PC-9 (cell line): ENCODE measurements at regions of chrX and their contacts with region 1.

Region 1: DNA sequence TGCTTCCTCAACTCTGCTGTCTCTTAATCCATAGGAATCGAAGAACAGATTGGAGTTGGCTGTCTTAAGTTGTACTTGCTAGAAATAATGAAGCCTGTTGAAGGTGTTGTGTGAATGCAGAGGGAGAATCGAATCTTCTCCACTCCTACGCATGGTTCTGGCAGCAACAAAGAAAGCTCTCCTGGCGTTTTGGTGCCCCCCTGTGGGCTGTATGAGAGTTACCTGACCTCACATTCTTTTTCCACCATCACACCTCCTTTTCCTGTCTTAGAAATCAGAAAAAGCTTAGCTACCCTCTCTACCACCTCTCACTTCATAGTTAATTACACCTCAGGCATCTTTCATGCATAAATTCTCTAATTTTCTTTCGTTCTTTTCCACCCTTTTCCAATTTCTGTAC is 16.3 kb downstream of the KLF8 start:
- DNase-seq: peak in 1 of 2 experiments; percentile 72
- H3K4me3 ChIP-seq: no peak overlapping the region
- H3K27ac ChIP-seq: no peak overlapping the region
- H3K4me1 ChIP-seq: no peaks in the 10 kb centered on the region
- H3K27me3 ChIP-seq: no peaks in the 10 kb centered on the region
- CTCF ChIP-seq: peak; percentile 74

Region 2: DNA sequence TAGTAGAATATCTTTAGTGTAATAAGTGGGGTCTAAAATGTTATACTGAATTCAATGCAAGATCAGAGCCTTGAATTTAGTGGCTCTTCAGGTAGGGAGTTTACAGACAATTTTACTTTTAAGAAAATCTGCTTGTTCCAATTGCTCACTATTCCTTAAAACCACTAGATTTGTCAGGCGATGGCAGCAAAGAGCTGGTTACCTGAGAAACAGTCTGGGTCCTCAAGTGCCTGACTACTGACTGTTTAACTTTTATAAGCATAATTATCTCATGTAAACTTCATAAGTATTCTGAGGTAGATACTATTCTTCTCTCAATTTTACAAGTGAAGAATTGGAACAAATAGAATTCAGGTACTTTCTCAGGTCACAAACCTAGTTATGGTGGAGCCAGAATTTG is 446.7 kb before region 1 on chrX:
- CTCF ChIA-PET with region 1: no interaction called
- POLR2A ChIA-PET with region 1: interaction called, 4 read pairs
- intact Hi-C with region 1: loop called (anchors 2 kb)
- DNase-seq: no peak
- H3K4me3 ChIP-seq: no peak overlapping the region
- H3K27ac ChIP-seq: no peak overlapping the region
- H3K4me1 ChIP-seq: 0 out of 2 replicates have a peak, but pooled peaks cover under 1% of the 10 kb centered on the region
- H3K27me3 ChIP-seq: no peaks in the 10 kb centered on the region
- CTCF ChIP-seq: no peak; the same call in 1 of the 2 replicates

Region 3: GRCh38 chrX:56025872-56026571 is 222.5 kb before region 1 on chrX:
- CTCF ChIA-PET with region 1: interaction called, 14 read pairs
- POLR2A ChIA-PET with region 1: no interaction called
- intact Hi-C with region 1: loop called (anchors 2 kb)
- DNase-seq: peak in 1 of 2 experiments; percentile 54
- H3K4me3 ChIP-seq: no peak overlapping the region
- H3K27ac ChIP-seq: no peak overlapping the region
- H3K4me1 ChIP-seq: peaks cover 29% of the 10 kb centered on the region
- H3K27me3 ChIP-seq: no peaks in the 10 kb centered on the region
- CTCF ChIP-seq: no peak

Region 4: DNA sequence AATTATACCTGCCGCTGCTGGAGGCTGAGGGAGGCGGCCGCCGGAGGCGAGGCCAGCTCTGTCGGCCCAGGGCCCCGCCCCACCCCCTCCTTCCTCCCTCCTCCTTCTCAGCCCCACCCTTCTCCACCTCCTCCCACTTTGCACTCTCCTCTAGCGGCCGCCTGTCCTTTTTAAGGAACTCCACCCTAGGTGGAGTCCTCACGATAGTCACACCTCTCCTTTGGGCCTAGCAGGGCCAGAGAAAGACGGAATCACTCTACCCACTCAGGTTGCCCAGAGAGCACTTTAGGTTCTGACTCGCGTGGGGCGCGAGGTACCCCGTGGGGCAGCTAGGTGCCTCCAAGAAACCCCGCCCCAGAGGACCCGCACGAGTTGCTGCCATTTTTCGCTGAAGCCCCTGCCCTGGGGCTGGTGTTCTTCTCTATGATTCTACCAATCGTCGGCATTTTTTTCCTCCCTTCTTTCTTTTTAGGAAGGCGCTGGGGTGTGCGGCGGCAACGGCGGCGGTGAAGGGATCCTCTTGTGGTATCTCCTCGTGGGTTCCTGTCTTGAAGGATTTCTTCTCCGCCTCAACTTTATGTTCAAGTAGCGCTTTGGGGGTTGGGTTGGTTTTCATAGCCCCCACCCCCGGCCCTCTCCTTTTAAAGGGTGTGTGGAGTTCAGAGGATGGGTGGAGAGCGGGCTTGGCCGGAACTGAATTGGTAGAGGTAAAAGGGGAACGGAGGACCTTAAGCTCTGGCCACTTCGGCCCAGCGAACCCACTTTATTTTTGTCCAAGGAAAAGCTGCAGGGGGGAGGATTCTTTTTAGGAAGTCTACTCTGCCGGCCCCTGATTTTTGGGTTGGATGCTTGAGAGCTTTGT is 16.0 kb before region 1 on chrX and contains the start of gene KLF8:
- CTCF ChIA-PET with region 1: interaction called, 10 read pairs
- POLR2A ChIA-PET with region 1: no interaction called
- intact Hi-C with region 1: no loop called
- DNase-seq: peak; percentile 62 to 84
- H3K4me3 ChIP-seq: peak within 1 kb of the TSS; percentile 83
- H3K27ac ChIP-seq: peak within 1 kb of the TSS; percentile 53; the same call in 1 of the 2 replicates
- H3K4me1 ChIP-seq: peaks cover 37% of the 10 kb centered on the region
- H3K27me3 ChIP-seq: no peaks in the 10 kb centered on the region
- CTCF ChIP-seq: no peak
- total RNA-seq, gene KLF8: 92.7 and 93.2 TPM in 2 replicates

Region 5: DNA sequence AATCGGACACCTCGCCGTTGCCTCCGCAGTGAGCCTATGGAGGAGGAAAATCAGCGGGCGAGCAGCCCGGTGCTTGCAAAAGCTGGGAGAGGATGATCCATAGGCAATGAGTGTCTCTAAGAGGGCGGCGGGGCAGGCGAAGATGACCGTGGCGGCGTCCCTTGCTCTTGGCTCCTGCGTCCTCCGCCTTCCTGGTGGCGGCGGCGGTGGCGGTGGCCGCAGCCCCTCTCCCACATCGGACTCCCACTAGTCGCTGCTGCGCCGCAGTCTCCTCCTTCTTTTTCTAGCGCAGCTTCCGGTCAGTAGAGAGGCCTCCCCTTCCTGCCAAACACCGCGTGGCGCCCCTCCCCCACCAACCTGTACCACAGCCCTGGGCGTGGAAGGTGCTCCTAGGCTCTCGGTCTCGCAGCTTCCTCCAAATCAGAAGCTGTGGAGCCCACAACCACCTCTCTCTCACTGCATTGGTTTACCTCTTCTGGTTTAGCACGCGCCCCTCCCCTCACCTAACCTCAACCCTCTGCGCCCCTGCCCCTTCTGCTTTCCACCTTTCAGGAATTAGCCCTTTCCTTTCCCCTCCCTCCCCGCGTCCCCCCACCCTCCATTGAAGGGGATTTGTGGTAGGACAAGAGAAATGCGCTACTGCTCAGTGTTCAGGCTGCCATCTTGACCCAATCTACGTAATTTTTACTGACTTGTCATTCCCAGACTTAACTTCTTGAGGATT is 746.9 kb after region 1 on chrX and contains the start of gene SPIN3:
- CTCF ChIA-PET with region 1: interaction called, 6 read pairs
- POLR2A ChIA-PET with region 1: no interaction called
- intact Hi-C with region 1: loop called (anchors 5 kb)
- DNase-seq: peak; percentile 74 to 97
- H3K4me3 ChIP-seq: peak within 1 kb of the TSS; percentile 82
- H3K27ac ChIP-seq: peak within 1 kb of the TSS; percentile 70
- H3K4me1 ChIP-seq: no peaks in the 10 kb centered on the region; the same call in 1 of the 2 replicates
- H3K27me3 ChIP-seq: no peaks in the 10 kb centered on the region
- CTCF ChIP-seq: no peak
- total RNA-seq, gene SPIN3: 29.8 and 39.6 TPM in 2 replicates